Endothelial cell of umbilical vein (primary cell): ENCODE measurements at regions of chr11 and their contacts with region 1.

Region 1: GRCh38 chr11:86068951-86069407 is at the start of gene PICALM:
- DNase-seq: peak; percentile 99
- H3K4me3 ChIP-seq: peak within 1 kb of the TSS; percentile 47 to 94 (median 89)
- H3K27ac ChIP-seq: peak within 1 kb of the TSS; percentile 100
- H3K4me1 ChIP-seq: peaks cover 27% of the 10 kb centered on the region
- H3K27me3 ChIP-seq: no peaks in the 10 kb centered on the region
- CTCF ChIP-seq: no peak
- POLR2A ChIP-seq: peak; percentile 82
- total RNA-seq, gene PICALM: 181 and 202 TPM in 2 replicates

Region 2: DNA sequence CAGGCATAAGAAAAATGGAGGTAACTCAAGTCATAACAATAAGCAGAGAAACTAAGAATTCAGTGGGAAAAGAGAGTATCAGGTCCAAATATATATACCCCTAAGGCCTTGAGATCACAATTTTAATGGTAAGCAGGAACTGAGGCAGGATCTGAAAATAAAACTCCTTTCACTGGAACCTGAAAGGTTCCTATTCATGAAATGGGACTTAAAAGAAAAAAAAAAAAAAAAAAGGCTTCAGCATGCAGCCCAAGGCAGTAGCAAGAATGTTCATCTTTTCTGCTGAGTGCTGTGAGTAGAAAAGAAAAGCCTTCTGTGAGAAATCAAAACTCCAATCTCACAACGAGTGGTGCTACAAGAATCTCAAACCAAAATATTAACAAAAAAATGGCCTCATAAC is 517.1 kb before region 1 on chr11:
- CTCF ChIA-PET with region 1: no interaction called
- POLR2A ChIA-PET with region 1: no interaction called
- dilution Hi-C with region 1: no loop called
- intact Hi-C with region 1: no loop called
- DNase-seq: no peak
- H3K4me3 ChIP-seq: no peak overlapping the region
- H3K27ac ChIP-seq: no peak overlapping the region
- H3K4me1 ChIP-seq: no peaks in the 10 kb centered on the region
- H3K27me3 ChIP-seq: no peaks in the 10 kb centered on the region
- CTCF ChIP-seq: no peak
- POLR2A ChIP-seq: no peak

Region 3: GRCh38 chr11:85664615-85665481 is 404.1 kb before region 1 on chr11 and contains the start of gene CREBZF:
- CTCF ChIA-PET with region 1: no interaction called
- POLR2A ChIA-PET with region 1: no interaction called
- dilution Hi-C with region 1: no loop called
- intact Hi-C with region 1: loop called (anchors 2 kb)
- DNase-seq: peak; percentile 94
- H3K4me3 ChIP-seq: peak within 1 kb of the TSS; percentile 40 to 92 (median 66)
- H3K27ac ChIP-seq: peak within 1 kb of the TSS; percentile 91
- H3K4me1 ChIP-seq: peaks cover 27% of the 10 kb centered on the region
- H3K27me3 ChIP-seq: no peaks in the 10 kb centered on the region
- CTCF ChIP-seq: no peak
- POLR2A ChIP-seq: peak; percentile 90
- total RNA-seq, gene CREBZF: 33.7 and 35.5 TPM in 2 replicates

Region 4: DNA sequence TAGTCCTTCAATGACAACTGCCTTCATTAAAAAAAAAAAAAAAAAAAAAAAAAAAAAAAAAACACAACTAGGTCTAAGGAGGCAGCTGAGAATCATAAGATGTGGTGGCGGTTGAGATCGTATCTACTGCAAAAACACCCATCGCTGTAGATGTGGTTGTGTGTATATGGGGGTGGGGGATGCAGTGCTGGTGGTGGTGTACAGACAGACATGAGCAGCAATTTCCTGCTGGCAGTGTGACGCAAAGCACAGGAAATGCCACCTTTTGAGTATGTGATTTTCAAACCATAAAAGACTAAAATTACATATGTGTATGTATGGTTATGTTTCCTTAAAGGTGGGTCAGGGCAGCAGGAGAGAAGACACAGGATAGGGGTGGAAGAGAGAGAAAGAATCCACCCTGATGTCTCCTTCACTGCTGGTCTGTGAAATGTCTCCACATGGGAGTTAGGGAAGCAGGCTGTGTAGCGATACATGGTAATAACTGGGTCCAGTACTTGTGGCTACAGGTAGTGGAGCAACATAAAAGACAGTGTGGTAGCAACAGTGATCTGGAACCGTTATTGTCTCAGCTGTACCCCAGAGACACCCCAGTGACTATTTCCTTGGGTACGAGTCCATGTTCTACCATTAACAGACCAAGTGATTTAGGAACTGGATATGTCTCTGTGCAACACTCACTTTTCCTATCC is 315.9 kb before region 1 on chr11:
- CTCF ChIA-PET with region 1: no interaction called
- POLR2A ChIA-PET with region 1: no interaction called
- dilution Hi-C with region 1: no loop called
- intact Hi-C with region 1: no loop called
- DNase-seq: peak; percentile 9
- H3K4me3 ChIP-seq: no peak overlapping the region
- H3K27ac ChIP-seq: no peak overlapping the region
- H3K4me1 ChIP-seq: peaks cover 5% of the 10 kb centered on the region
- H3K27me3 ChIP-seq: peaks cover 5 to 8% of the 10 kb centered on the region in 2 experiments
- CTCF ChIP-seq: no peak
- POLR2A ChIP-seq: no peak

Region 5: GRCh38 chr11:86035164-86035563 is 33.8 kb before region 1 on chr11:
- CTCF ChIA-PET with region 1: no interaction called
- POLR2A ChIA-PET with region 1: no interaction called
- dilution Hi-C with region 1: no loop called
- intact Hi-C with region 1: no loop called
- DNase-seq: no peak
- H3K4me3 ChIP-seq: no peak overlapping the region
- H3K27ac ChIP-seq: no peak overlapping the region
- H3K4me1 ChIP-seq: peaks cover 9% of the 10 kb centered on the region
- H3K27me3 ChIP-seq: no peaks in the 10 kb centered on the region
- CTCF ChIP-seq: no peak
- POLR2A ChIP-seq: no peak

Region 6: DNA sequence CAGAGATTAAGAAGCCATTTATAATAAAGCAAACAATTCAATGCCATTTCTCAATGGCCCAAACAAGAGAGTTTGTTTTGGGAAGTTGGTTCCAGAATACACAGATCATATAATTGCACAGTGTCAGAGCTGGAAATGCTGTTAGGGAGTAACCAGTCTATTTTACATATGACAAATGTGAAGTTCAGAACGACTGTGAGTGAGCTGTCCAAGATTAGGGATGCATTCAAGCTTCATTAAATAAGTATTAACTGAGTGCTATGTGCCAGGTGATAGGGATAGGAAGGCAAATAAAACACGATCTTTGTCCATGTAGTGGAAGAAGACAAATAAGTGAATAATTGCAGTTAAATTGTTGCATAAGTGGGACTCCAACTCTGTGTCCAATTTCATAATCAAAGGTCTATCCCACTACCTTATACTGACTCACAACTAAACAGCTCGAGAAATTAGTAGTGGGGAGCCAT is 33.0 kb after region 1 on chr11:
- CTCF ChIA-PET with region 1: no interaction called
- POLR2A ChIA-PET with region 1: no interaction called
- dilution Hi-C with region 1: no loop called
- intact Hi-C with region 1: loop called (anchors 5 kb)
- DNase-seq: no peak
- H3K4me3 ChIP-seq: no peak overlapping the region
- H3K27ac ChIP-seq: no peak overlapping the region
- H3K4me1 ChIP-seq: no peaks in the 10 kb centered on the region
- H3K27me3 ChIP-seq: no peaks in the 10 kb centered on the region
- CTCF ChIP-seq: no peak
- POLR2A ChIP-seq: no peak

Region 7: DNA sequence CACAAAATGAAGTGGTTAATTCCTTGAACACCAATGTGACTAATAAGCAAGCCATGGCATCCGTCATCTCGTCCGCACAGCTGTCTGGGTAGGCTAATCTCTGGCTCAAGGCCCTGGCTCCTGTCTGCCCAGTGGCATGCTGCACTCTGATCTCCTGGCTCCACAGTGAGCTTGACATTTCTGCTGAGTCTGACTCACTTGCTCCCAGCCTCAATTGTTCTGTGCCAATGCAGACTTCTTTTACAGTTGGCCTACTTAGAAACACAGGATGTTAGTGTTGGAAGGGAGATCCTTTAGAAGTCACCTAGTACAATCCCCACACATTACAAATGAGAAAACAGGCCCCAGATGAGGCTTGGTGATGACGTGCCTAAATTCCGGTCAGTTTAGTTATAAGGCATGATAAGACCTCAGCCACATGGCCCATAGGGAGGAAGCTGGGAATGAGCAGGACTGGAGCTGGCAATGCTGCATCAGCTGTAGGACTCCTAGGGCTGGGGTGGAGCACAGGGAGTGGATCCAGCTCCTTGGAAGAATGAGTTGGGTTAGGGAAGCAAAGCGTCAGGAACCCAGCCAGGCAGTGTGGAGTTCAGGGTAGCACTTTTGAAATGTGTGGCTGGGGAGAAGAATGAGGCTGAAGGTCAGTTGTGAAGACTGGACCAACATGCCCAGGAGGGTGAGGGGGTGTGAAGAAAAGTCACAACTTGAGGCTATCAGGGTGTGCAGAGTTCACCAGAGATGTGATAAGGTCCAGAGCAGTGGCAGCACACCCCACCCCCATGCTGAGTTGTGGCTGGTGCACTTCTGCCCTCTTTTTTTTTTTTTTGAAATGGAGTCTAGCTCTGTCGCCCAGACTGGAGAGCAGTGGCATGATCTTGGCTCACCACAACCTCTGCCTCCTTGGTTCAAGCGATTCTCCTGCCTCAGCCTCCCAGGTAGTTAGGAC is 105.4 kb after region 1 on chr11:
- CTCF ChIA-PET with region 1: interaction called, 31 read pairs
- POLR2A ChIA-PET with region 1: interaction called, 26 read pairs
- dilution Hi-C with region 1: no loop called
- intact Hi-C with region 1: loop called (anchors 1 kb)
- DNase-seq: peak; percentile 100
- H3K4me3 ChIP-seq: no peak overlapping the region
- H3K27ac ChIP-seq: peak overlapping the region; percentile 97
- H3K4me1 ChIP-seq: peaks cover 39% of the 10 kb centered on the region
- H3K27me3 ChIP-seq: no peaks in the 10 kb centered on the region
- CTCF ChIP-seq: no peak
- POLR2A ChIP-seq: no peak

Region 8: GRCh38 chr11:86244522-86245368 is 175.8 kb after region 1 on chr11 and contains the start of gene EED:
- CTCF ChIA-PET with region 1: interaction called, 3 read pairs
- POLR2A ChIA-PET with region 1: interaction called, 11 read pairs
- dilution Hi-C with region 1: no loop called
- intact Hi-C with region 1: loop called (anchors 1 kb)
- DNase-seq: peak; percentile 95
- H3K4me3 ChIP-seq: peak within 1 kb of the TSS; percentile 69 to 85 (median 84)
- H3K27ac ChIP-seq: peak within 1 kb of the TSS; percentile 85
- H3K4me1 ChIP-seq: peaks cover 16% of the 10 kb centered on the region
- H3K27me3 ChIP-seq: peaks cover 20% of the 10 kb centered on the region in 2 experiments
- CTCF ChIP-seq: no peak
- POLR2A ChIP-seq: peak; percentile 88
- total RNA-seq, gene EED: 21.8 and 22.7 TPM in 2 replicates